Heart right ventricle (tissue), 16 donors: ENCODE measurements at regions of chr19 and their contacts with region 1.

Region 1: DNA sequence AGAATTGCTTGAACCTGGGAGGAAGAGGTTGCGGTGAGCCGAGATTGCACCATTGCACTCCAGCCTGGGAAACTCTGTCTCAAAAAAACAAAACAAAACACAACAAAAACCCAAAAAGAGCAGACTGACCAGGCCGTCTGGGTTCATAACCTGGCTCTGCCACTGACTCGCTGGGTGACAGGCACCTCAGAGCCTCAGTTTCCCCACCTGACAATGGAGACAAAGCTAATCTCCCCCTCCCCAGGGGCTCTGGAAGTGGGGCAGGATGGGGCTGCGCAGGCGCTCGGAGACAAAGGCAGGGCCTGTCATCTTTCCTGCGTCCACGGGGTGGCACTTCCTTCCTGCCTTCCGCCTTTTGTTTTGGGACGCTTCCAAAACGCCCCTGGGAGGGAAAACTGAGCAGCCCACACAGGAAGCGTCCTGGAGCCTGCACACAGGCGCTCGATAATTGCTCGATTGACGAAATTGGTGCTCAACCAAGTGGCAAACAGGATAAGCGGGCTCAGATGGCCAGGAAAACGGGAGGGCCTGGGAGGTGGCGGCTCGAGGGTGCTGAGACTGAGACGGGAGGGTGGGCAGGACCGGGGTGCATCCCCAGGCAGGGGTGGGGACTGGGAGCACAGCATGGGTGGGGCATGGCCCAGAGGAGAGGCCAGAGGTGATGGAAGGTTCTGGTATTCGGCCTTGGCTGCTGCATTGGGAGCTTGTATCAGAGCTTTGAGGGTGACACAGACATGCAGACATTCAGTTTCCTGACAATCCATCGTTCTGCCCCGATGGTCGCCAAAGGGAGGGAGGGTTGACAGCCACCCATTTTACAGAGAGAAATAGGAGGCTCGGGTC is 17.8 kb downstream of the SPC24 start:
- DNase-seq: peak; percentile 79 to 90
- ATAC-seq: peak; percentile 55 to 67 (median 59)
- H3K4me3 ChIP-seq: peak overlapping the region in 9 of 10 donors; percentile 4 to 46 (median 29)
- H3K27ac ChIP-seq: peak overlapping the region; percentile 84 to 97 (median 94)
- H3K4me1 ChIP-seq: peaks cover 25 to 65% (median 49%) of the 10 kb centered on the region in 9 donors
- H3K27me3 ChIP-seq: no peaks in the 10 kb centered on the region
- CTCF ChIP-seq: peak; percentile 68 to 92 (median 79)

Region 2: DNA sequence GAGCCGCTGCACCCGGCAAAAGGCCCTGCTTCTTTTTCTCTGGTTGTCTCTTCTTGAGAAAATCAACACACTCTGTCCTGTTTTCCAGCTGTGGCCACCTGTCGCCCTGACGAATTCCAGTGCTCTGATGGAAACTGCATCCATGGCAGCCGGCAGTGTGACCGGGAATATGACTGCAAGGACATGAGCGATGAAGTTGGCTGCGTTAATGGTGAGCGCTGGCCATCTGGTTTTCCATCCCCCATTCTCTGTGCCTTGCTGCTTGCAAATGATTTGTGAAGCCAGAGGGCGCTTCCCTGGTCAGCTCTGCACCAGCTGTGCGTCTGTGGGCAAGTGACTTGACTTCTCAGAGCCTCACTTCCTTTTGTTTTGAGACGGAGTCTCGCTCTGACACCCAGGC is 31.3 kb before region 1 on chr19:
- intact Hi-C with region 1: no loop called
- DNase-seq: peak; percentile 56 to 57
- ATAC-seq: peak in 7 of 8 donors; percentile 45 to 87 (median 76)
- H3K4me3 ChIP-seq: no peak overlapping the region
- H3K27ac ChIP-seq: peak overlapping the region in 1 of 10 donors; percentile 1
- H3K4me1 ChIP-seq: peaks cover 0 to 6% (median 0%) of the 10 kb centered on the region in 9 donors
- H3K27me3 ChIP-seq: no peaks in the 10 kb centered on the region
- CTCF ChIP-seq: peak in 3 of 9 donors; percentile 16 to 23 (median 18)

Region 3: GRCh38 chr19:11164879-11165406 is 27.2 kb after region 1 on chr19:
- intact Hi-C with region 1: loop called in 1 of 10 experiments (anchors 2 kb)
- DNase-seq: peak; percentile 80 to 87
- ATAC-seq: peak; percentile 61 to 87 (median 76)
- H3K4me3 ChIP-seq: peak overlapping the region in 2 of 10 donors; percentile 11
- H3K27ac ChIP-seq: peak overlapping the region; percentile 70 to 91 (median 83)
- H3K4me1 ChIP-seq: peaks cover 11 to 46% (median 35%) of the 10 kb centered on the region in 9 donors
- H3K27me3 ChIP-seq: no peaks in the 10 kb centered on the region
- CTCF ChIP-seq: no peak

Region 4: DNA sequence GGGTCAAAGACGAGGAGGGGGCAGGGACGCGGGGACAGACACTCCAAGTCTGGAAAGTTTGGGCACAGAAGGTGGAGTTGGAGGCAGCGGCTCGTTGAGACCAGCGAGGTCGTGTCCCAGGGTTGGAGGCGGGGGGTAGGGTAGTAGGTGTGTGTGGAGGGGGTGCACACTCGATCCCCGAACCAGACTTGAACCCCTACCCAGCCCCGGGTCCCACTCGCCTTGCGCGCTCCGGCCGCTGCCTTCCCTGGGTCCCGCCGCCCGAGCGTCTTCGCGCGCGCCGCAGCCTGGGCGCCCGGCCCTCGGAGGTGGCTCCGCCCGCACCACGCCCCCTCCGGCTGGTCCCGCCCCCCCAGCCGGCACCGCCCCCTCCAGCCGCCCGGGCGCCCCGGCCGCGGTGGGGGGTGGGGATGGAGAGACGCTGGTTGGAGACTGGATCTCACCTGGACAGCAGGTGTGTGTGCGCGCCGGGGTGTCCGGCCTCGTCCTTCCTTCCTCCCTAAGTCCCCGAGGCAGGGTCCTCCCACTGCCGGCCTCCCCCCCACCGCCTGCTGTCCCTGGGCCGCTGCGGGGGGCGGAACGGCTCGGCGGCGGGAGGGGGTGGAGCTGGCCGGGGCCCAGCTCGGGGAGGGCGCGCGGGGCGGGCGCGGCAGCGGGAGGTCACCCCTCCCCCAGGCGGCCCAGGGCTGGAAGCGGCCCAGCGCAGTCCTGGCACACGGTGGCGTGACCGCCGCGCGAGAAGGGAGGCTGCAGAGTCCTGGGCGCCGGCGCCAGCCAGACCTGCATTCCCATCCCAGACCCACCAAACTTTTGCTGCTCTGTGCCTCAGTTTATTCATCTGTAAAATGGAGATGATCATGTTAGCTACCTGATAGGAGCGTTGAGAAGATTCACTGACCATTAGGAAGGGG is 59.8 kb after region 1 on chr19 and contains the start of gene KANK2:
- intact Hi-C with region 1: loop called in 3 of 10 experiments (anchors 2 to 5 kb)
- DNase-seq: peak; percentile 82 to 91
- ATAC-seq: peak; percentile 78 to 93 (median 86)
- H3K4me3 ChIP-seq: peak within 1 kb of the TSS; percentile 57 to 88 (median 66)
- H3K27ac ChIP-seq: peak within 1 kb of the TSS; percentile 82 to 98 (median 90)
- H3K4me1 ChIP-seq: peaks cover 16 to 64% (median 49%) of the 10 kb centered on the region in 9 donors
- H3K27me3 ChIP-seq: peaks cover 0 to 7% (median 0%) of the 10 kb centered on the region in 7 donors
- CTCF ChIP-seq: peak in 3 of 9 donors; percentile 31 to 34 (median 32)
- total RNA-seq, gene KANK2: 243 to 355 (median 307) TPM

Region 5: GRCh38 chr19:11234486-11235075 is 96.8 kb after region 1 on chr19:
- intact Hi-C with region 1: no loop called
- DNase-seq: no peak
- ATAC-seq: no peak
- H3K4me3 ChIP-seq: no peak overlapping the region
- H3K27ac ChIP-seq: no peak overlapping the region
- H3K4me1 ChIP-seq: no peaks in the 10 kb centered on the region
- H3K27me3 ChIP-seq: no peaks in the 10 kb centered on the region
- CTCF ChIP-seq: no peak

Region 6: GRCh38 chr19:11279496-11280236 is 141.9 kb after region 1 on chr19:
- intact Hi-C with region 1: loop called in 2 of 10 experiments (anchors 5 to 10 kb)
- DNase-seq: no peak
- ATAC-seq: peak in 2 of 8 donors; percentile 15 to 31
- H3K4me3 ChIP-seq: no peak overlapping the region
- H3K27ac ChIP-seq: peak overlapping the region in 8 of 10 donors; percentile 6 to 77 (median 47)
- H3K4me1 ChIP-seq: peaks cover 0 to 36% (median 18%) of the 10 kb centered on the region in 9 donors
- H3K27me3 ChIP-seq: peaks cover 0 to 38% (median 0%) of the 10 kb centered on the region in 7 donors
- CTCF ChIP-seq: no peak

Region 7: GRCh38 chr19:11346092-11346940 is 208.6 kb after region 1 on chr19 and contains the starts of genes CCDC159 and TMEM205:
- intact Hi-C with region 1: loop called in 1 of 10 experiments (anchors 10 kb)
- DNase-seq: peak; percentile 97 to 99
- ATAC-seq: peak; percentile 94 to 97 (median 97)
- H3K4me3 ChIP-seq: peak within 1 kb of the TSS; percentile 44 to 92 (median 68)
- H3K27ac ChIP-seq: peak within 1 kb of the TSS; percentile 27 to 90 (median 82)
- H3K4me1 ChIP-seq: peaks cover 6 to 32% (median 25%) of the 10 kb centered on the region in 9 donors
- H3K27me3 ChIP-seq: no peaks in the 10 kb centered on the region
- CTCF ChIP-seq: peak in 4 of 9 donors; percentile 11 to 38 (median 36)
- total RNA-seq, gene CCDC159: 13.4 to 25.5 (median 19.7) TPM
- total RNA-seq, gene TMEM205: 65.1 to 114 (median 83.8) TPM